ENCODE measurements at regions of chr4 and their contacts with region 1.

Region 1: DNA sequence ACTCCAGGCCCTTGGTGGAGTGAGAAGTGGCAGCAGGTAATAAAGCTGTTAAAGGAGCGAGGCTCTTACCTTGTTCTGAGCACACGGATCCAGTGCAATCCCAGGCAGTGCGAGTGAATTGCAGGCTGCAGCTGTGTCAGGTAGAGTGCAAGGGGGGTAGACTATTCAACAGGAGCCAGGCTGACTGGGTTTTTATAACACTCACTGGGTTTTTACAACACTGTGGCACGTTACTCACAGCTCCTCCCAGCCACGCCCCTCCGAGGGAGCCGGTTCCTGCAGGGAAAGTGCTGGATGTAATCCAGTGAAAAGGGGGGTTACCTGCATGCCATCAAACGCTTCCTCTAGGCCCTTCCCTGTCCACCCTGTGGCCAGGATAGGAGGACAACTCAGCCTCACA is 358 bp downstream of the FGFBP1 start:
- DNase-seq: peak; percentile 85
- H3K4me3 ChIP-seq: peak overlapping the region; percentile 32 to 78 (median 75)
- H3K27ac ChIP-seq: peak overlapping the region; percentile 77
- H3K4me1 ChIP-seq: peaks cover 25% of the 10 kb centered on the region
- H3K27me3 ChIP-seq: no peaks in the 10 kb centered on the region
- CTCF ChIP-seq: no peak

Region 2: GRCh38 chr4:15681207-15682015 is 256.8 kb before region 1 on chr4 and contains the start of gene FAM200B:
- CTCF ChIA-PET with region 1: no interaction called
- dilution Hi-C with region 1: no loop called
- in situ Hi-C with region 1: loop called in 1 of 2 experiments (anchors 25 kb)
- intact Hi-C with region 1: no loop called
- DNase-seq: peak; percentile 100
- H3K4me3 ChIP-seq: peak within 1 kb of the TSS; percentile 75 to 98 (median 95)
- H3K27ac ChIP-seq: peak within 1 kb of the TSS; percentile 97
- H3K4me1 ChIP-seq: peaks cover 30% of the 10 kb centered on the region
- H3K27me3 ChIP-seq: no peaks in the 10 kb centered on the region
- CTCF ChIP-seq: peak in 1 of 2 donors; percentile 26
- total RNA-seq, gene FAM200B: 19.3 to 36.1 TPM

Region 3: GRCh38 chr4:15920723-15921591 is 17.2 kb before region 1 on chr4:
- CTCF ChIA-PET with region 1: interaction called, 3 read pairs
- dilution Hi-C with region 1: no loop called
- in situ Hi-C with region 1: no loop called
- intact Hi-C with region 1: loop called (anchors 2 kb)
- DNase-seq: peak; percentile 93
- H3K4me3 ChIP-seq: no peak overlapping the region
- H3K27ac ChIP-seq: peak overlapping the region; percentile 89
- H3K4me1 ChIP-seq: peaks cover 42% of the 10 kb centered on the region
- H3K27me3 ChIP-seq: no peaks in the 10 kb centered on the region
- CTCF ChIP-seq: no peak

Region 4: DNA sequence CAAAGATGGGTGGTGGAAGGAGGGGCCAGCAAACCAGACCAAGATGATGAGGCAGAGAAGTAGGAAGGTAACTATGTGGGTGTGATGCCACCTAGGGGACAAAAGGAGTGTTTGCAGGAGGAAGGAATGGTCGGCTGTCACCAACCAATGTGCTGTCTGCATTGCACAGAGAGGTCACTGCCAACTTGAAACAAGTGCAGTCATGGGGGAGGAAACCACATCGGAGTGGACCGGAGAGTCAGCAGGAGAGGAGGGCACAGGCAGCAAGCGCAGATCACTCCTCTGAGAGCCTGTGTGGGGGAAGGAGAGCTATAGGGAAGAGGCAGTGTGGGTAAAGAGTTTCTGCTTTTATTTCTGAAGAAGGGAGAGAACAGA is 63.3 kb after region 1 on chr4:
- CTCF ChIA-PET with region 1: no interaction called
- dilution Hi-C with region 1: no loop called
- in situ Hi-C with region 1: no loop called
- intact Hi-C with region 1: no loop called
- DNase-seq: peak; percentile 56
- H3K4me3 ChIP-seq: no peak overlapping the region
- H3K27ac ChIP-seq: no peak overlapping the region
- H3K4me1 ChIP-seq: no peaks in the 10 kb centered on the region
- H3K27me3 ChIP-seq: peaks cover 6% of the 10 kb centered on the region
- CTCF ChIP-seq: peak; percentile 80 to 86

Measured in mammary epithelial cell (primary cell).